B cell (primary cell): ENCODE measurements at regions of chr17 and their contacts with region 1.

Region 1: DNA sequence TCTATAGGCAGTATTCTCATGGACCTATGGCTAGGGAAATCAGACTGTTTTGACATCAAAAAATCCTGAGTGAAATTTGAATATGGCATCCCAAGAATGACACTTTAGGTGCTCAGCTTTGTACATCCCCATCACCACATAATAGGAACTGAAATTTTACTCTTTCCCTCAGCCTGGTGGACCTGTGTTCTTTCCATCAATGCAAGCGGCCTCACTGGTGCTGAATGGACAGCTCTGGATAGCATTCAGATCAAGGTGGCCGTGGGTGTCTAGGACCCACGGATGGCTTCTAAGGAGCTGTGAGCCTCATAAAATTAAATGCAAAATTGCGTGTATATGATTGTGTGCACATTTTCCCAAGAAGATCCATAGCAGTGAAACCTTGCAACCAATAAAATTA is 152.6 kb downstream of the MAP2K6 start:
- DNase-seq: no peak
- ATAC-seq: no peak
- H3K4me3 ChIP-seq: no peak overlapping the region
- H3K4me3 Mint-ChIP-seq: no peak overlapping the region
- H3K27ac ChIP-seq: no peak overlapping the region
- H3K27ac Mint-ChIP-seq: no peak overlapping the region
- H3K4me1 ChIP-seq: peaks cover 0 to 6% of the 10 kb centered on the region in 2 donors
- H3K4me1 Mint-ChIP-seq: peaks cover 2% of the 10 kb centered on the region
- H3K27me3 ChIP-seq: no peaks in the 10 kb centered on the region
- H3K27me3 Mint-ChIP-seq: peaks cover 15% of the 10 kb centered on the region
- CTCF ChIP-seq: no peak

Region 2: GRCh38 chr17:70144260-70144846 is 577.2 kb after region 1 on chr17:
- CTCF ChIA-PET with region 1: interaction called, 71 read pairs
- POLR2A ChIA-PET with region 1: no interaction called
- intact Hi-C with region 1: loop called (anchors 1 kb)
- DNase-seq: peak; percentile 38
- ATAC-seq: no peak
- H3K4me3 ChIP-seq: no peak overlapping the region
- H3K4me3 Mint-ChIP-seq: no peak overlapping the region
- H3K27ac ChIP-seq: no peak overlapping the region
- H3K27ac Mint-ChIP-seq: no peak overlapping the region
- H3K4me1 ChIP-seq: no peaks in the 10 kb centered on the region
- H3K4me1 Mint-ChIP-seq: no peaks in the 10 kb centered on the region
- H3K27me3 ChIP-seq: no peaks in the 10 kb centered on the region
- H3K27me3 Mint-ChIP-seq: peaks cover 6% of the 10 kb centered on the region
- CTCF ChIP-seq: peak; percentile 75

Region 3: GRCh38 chr17:70552230-70552981 is 985.3 kb after region 1 on chr17:
- CTCF ChIA-PET with region 1: interaction called, 15 read pairs
- POLR2A ChIA-PET with region 1: no interaction called
- intact Hi-C with region 1: no loop called
- DNase-seq: peak; percentile 30
- ATAC-seq: no peak
- H3K4me3 ChIP-seq: no peak overlapping the region
- H3K4me3 Mint-ChIP-seq: no peak overlapping the region
- H3K27ac ChIP-seq: no peak overlapping the region
- H3K27ac Mint-ChIP-seq: no peak overlapping the region
- H3K4me1 ChIP-seq: no peaks in the 10 kb centered on the region
- H3K4me1 Mint-ChIP-seq: no peaks in the 10 kb centered on the region
- H3K27me3 ChIP-seq: no peaks in the 10 kb centered on the region
- H3K27me3 Mint-ChIP-seq: no peaks in the 10 kb centered on the region
- CTCF ChIP-seq: peak; percentile 59

Region 4: DNA sequence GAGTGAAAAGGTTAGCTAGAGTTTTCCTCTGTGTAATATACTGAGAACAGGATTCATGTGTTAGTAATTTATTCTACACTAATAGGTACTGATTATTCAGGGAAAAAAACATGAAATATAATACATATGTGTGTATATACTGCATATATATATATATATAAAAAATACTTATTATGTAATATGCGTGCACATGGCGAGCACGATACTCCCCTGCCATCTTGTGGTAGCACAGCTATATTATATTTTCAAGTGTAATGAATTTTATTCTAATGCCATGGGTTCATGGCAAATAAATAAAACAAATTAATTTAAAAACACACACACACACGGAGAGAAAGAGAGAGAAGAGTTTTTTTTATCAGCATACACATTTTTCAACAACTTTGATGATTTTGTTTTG is 1062.8 kb after region 1 on chr17:
- CTCF ChIA-PET with region 1: interaction called, 5 read pairs
- POLR2A ChIA-PET with region 1: no interaction called
- intact Hi-C with region 1: loop called (anchors 5 kb)
- DNase-seq: no peak
- ATAC-seq: no peak
- H3K4me3 ChIP-seq: no peak overlapping the region
- H3K4me3 Mint-ChIP-seq: no peak overlapping the region
- H3K27ac ChIP-seq: no peak overlapping the region
- H3K27ac Mint-ChIP-seq: no peak overlapping the region
- H3K4me1 ChIP-seq: no peaks in the 10 kb centered on the region
- H3K4me1 Mint-ChIP-seq: no peaks in the 10 kb centered on the region
- H3K27me3 ChIP-seq: no peaks in the 10 kb centered on the region
- H3K27me3 Mint-ChIP-seq: no peaks in the 10 kb centered on the region
- CTCF ChIP-seq: no peak